Activated naive CD4-positive, alpha-beta T cell treated with anti-CD3 and anti-CD28 coated beads, Interleukin-2, amount 10 ng/mL, durations not matched to agents 7 days and 5 days (primary cell): ENCODE measurements at regions of chr1 and their contacts with region 1.

Region 1: GRCh38 chr1:229479660-229480399 is 28.3 kb downstream of the NUP133 start:
- DNase-seq: no peak
- H3K4me3 Mint-ChIP-seq: no peak overlapping the region
- H3K27ac Mint-ChIP-seq: no peak overlapping the region
- H3K4me1 Mint-ChIP-seq: peaks cover 9% of the 10 kb centered on the region
- H3K27me3 Mint-ChIP-seq: no peaks in the 10 kb centered on the region

Region 2: GRCh38 chr1:229495782-229496181 is 16.0 kb after region 1 on chr1:
- CTCF ChIA-PET with region 1: interaction called, 15 read pairs
- DNase-seq: no peak
- H3K4me3 Mint-ChIP-seq: no peak overlapping the region
- H3K27ac Mint-ChIP-seq: no peak overlapping the region
- H3K4me1 Mint-ChIP-seq: no peaks in the 10 kb centered on the region
- H3K27me3 Mint-ChIP-seq: no peaks in the 10 kb centered on the region

Region 3: GRCh38 chr1:229699613-229700267 is 219.9 kb after region 1 on chr1:
- CTCF ChIA-PET with region 1: no interaction called
- DNase-seq: no peak
- H3K4me3 Mint-ChIP-seq: no peak overlapping the region
- H3K27ac Mint-ChIP-seq: no peak overlapping the region
- H3K4me1 Mint-ChIP-seq: no peaks in the 10 kb centered on the region
- H3K27me3 Mint-ChIP-seq: peaks cover under 1% of the 10 kb centered on the region